H1 (cell line): ENCODE measurements at regions of chr6 and their contacts with region 1.

Region 1: DNA sequence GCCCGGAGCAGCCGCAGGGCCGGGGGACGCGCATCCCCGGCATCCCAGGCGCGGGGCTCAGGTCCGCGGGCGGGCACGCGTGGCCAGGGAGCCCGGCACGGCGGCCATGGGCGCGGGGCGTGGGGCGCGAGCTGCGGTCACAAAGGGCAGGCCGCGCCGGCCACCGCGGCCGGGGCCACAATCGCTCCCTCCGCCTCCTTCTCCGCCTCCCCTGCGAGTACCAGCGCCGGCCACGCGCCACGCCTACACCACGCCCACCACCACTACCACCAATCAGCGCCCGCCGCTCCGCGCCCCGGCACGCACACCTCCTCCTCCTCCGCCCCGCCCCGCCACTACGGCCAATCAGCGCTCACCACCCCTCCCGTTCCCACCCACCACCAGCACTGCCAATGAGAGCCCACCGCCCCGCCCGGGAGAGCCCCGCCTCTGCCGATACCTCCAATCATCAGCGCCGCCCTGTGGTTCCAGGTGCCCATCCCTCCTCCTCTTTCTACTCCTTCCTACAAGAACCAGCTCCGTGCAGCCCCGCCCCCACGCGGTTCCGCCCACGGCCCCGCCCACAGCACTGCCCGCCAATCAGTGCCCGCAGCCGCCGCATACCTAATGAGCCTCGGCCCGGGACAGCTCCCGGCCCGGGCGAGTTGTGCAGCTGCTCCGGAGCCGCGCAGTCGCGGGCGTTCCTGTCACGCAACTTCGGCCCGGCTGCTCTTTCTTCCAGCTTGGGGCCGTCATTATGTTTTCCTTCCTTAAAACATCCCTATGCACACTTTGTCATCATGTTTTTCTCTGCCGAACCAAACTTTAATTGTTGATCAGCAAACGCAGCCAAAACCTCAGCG is at the start of gene RPS6KA2:
- DNase-seq: peak; percentile 98 to 100
- H3K4me3 ChIP-seq: peak within 1 kb of the TSS; percentile 67 to 77 (median 76)
- H3K27ac ChIP-seq: peak within 1 kb of the TSS; percentile 46; the same call in 1 of the 2 replicates
- H3K4me1 ChIP-seq: peaks cover 3 to 14% (median 9%) of the 10 kb centered on the region in 4 experiments; a peak in 6 of 7 replicates
- H3K27me3 ChIP-seq: peaks cover 0 to 31% (median 15%) of the 10 kb centered on the region in 4 experiments; a peak in 5 of 7 replicates
- CTCF ChIP-seq: no peak
- EP300 ChIP-seq: no peak
- POLR2A ChIP-seq: peak; percentile 82 to 84
- RAD21 ChIP-seq: no peak
- total RNA-seq, gene RPS6KA2: 24.4 and 25.7 TPM in 2 replicates

Region 2: DNA sequence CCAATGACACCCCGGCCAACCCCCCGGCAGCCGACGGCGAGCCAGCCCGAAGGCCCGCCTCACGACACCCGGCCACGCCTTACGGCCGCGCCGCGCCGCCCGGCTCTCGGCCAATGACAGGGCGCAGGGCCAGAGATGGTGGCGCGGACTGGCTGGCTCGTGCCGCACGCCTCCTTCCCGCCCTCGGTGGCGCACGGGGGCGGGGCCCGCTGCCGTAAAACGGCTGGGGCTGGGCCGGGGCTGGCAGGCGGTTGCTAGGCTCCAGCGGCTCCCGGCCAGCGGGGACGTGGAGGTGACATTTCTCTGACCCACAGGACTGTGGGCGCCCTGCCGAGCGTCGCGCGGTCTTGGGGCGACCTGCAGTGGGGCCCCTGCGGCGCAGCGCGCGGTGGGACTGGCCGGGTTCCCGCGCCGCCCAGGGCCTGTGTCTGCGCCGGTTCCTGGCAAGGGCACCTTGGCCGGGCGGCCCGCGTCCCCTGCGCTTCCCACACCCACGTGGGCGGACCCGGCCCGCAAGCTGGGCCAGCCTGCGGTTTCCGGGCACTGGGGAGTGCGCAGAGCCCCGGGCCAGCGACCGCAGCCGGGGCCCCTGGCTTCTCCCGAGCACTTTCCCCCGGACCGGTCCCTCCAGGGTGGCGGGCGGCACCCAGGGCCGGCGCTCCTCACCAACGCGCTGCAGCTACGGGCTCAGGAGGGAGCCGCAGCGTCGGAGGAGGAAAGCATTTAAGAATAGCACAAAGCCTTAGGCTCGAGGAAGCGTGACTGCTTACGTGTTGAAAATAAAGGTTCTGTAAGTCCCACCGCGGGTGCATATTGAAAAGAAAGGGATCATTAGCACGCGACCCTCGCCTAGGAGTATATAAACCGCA is 244.1 kb before region 1 on chr6 and contains the start of gene MPC1:
- CTCF ChIA-PET with region 1: no interaction called
- POLR2A ChIA-PET with region 1: no interaction called
- DNase-seq: peak; percentile 88 to 95
- H3K4me3 ChIP-seq: peak within 1 kb of the TSS; percentile 72 to 83 (median 76)
- H3K27ac ChIP-seq: peak within 1 kb of the TSS; percentile 55
- H3K4me1 ChIP-seq: peaks cover 0 to 4% (median 1%) of the 10 kb centered on the region in 4 experiments; a peak in 3 of 7 replicates
- H3K27me3 ChIP-seq: no peaks in the 10 kb centered on the region
- CTCF ChIP-seq: no peak
- EP300 ChIP-seq: no peak
- POLR2A ChIP-seq: peak; percentile 46 to 64; a peak in 2 of 3 replicates
- RAD21 ChIP-seq: no peak
- total RNA-seq, gene MPC1: 12.6 and 15.5 TPM in 2 replicates

Region 3: DNA sequence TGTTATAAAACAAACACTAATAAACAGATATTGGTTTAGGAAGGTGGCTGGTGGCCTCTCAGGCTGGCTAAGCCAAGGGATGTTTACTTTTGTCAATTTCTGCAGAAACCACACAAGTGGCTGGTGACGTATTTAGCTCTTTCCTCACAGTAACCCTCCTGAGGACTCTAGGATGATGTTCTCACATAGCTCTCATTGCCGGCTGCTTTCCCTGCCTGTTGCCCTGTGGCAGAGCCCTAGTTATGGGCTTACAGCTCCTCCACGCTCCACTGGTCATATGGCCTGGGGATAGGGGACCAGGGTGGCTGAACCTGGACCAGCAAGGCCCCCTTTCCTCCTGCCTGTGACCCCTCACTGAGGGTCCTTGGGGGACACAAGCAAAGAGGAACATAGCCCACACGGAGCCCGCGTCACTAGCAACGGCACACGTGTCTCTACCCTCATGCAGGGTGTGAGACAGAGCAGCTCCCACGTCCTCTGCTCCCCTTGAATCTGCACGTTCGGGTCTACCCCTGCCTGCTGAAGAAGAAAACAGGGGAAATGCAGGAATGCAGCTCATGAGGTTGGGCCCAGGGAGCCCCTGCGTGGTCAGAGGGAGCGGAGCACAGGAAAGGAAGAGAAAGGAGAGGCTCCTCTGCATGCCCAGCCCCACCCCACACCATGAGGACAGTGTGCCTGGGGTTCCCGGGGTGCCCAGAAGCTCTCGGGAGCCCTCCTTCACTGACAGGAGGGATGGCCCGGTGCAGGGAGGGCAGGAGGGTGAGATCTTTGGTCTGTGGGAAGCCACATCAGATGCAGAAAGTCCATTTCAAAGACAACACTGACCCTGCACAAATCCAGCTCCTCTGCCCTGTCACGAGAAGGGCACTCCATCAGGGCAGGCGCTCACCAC is 54.6 kb before region 1 on chr6:
- CTCF ChIA-PET with region 1: no interaction called
- POLR2A ChIA-PET with region 1: interaction called, 10 read pairs
- DNase-seq: peak; percentile 25 to 58
- H3K4me3 ChIP-seq: 0 out of 8 replicates have a peak overlapping the region, but pooled peaks of 1 of the 4 experiments have one; percentile 5
- H3K27ac ChIP-seq: peak overlapping the region; percentile 54; the same call in 1 of the 2 replicates
- H3K4me1 ChIP-seq: peaks cover 11 to 16% (median 14%) of the 10 kb centered on the region in 4 experiments
- H3K27me3 ChIP-seq: no peaks in the 10 kb centered on the region
- CTCF ChIP-seq: peak in 1 of 3 experiments; percentile 14; a peak in 1 of 4 replicates
- EP300 ChIP-seq: no peak
- POLR2A ChIP-seq: no peak
- RAD21 ChIP-seq: peak in 1 of 2 experiments; percentile 41; a peak in 3 of 4 replicates

Region 4: GRCh38 chr6:166615059-166615770 is 12.0 kb before region 1 on chr6:
- CTCF ChIA-PET with region 1: interaction called, 4 read pairs
- POLR2A ChIA-PET with region 1: interaction called, 19 read pairs
- DNase-seq: no peak
- H3K4me3 ChIP-seq: no peak overlapping the region
- H3K27ac ChIP-seq: no peak overlapping the region
- H3K4me1 ChIP-seq: peaks cover 0 to 5% (median 2%) of the 10 kb centered on the region in 4 experiments; a peak in 5 of 7 replicates
- H3K27me3 ChIP-seq: no peaks in the 10 kb centered on the region
- CTCF ChIP-seq: no peak
- EP300 ChIP-seq: no peak
- POLR2A ChIP-seq: no peak
- RAD21 ChIP-seq: no peak